Activated CD4-positive, alpha-beta T cell treated with anti-CD3 and anti-CD28 coated beads, Interleukin-2, amount 10 ng/mL, durations not matched to agents 7 days and 5 days (primary cell): ENCODE measurements at regions of chr7 and their contacts with region 1.

Region 1: DNA sequence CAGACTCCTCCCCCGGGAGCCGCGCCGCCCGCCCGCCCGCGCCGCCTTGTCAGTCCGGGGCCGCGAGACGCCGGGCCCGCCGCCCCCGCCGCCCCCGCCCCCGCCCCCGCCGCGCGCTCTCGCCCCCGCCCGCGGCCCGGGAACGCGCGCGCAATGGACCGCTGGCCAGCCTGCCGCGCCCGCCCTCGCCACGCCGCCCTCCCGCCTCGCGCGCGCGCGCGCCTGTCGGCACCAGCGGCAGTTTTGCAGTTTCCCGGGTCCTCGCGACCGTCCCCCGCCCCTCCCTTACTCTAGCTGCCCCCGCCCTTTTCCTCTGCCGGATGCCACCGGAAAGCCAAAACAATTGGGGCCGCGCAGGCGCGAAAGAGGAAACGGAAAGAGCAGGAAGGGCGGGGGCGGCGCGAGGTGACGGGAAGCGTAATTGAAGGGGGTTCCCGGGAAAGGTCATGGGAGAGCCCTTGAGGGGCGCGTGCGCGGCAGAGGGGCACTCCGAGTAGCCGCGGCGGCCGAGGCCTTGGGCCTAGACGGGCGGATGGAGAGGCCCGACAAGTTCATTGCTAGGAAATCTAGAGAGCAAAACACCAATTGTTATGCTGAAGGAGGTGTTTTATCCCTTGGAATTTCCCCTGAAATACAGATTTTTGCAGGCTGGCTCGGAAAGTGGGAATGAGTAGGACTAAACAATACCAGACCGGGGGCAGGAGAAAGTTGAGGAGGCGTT is 400 bp upstream of the KBTBD2 start:
- DNase-seq: peak; percentile 98
- H3K4me3 Mint-ChIP-seq: peak overlapping the region; percentile 95
- H3K27ac Mint-ChIP-seq: peak overlapping the region; percentile 100
- H3K4me1 Mint-ChIP-seq: peaks cover 47% of the 10 kb centered on the region
- H3K27me3 Mint-ChIP-seq: no peaks in the 10 kb centered on the region

Region 2: DNA sequence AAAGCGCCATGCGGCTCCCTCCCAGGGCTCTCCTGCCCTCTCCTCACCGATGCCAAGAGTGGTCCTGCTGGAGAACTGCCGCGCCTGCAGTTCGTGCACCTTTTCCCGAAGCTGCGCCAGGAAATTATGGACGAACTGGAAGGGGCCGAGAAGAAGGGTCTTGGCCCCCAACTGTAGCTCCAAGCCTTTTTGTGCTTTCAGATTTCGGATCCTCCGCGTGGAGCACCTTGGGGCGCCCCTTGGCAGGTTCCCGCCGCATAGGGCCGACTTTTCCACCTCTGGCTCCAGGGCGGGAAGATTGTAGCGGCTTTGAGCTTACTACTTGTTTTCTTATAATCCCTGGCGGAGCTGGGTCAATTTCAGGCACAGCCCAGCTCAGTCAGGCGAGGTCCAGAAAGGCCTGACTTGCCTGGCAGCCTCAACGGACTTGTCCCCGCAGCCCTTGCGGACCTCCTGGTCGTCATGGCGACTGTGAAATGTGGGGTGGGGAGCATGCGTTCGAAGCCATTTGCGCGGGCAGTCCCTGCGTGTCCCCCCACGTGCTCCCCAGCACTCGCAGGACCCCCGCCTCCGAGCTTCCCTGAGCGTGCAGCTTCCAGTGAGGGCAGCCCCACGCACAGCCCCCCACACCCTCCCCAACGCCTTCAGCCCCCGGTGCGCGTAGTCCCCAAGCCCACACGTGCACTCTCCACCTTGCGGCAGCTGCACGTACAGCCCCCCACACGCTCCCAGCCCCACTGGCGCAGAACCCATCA is 130.3 kb before region 1 on chr7:
- CTCF ChIA-PET with region 1: no interaction called
- POLR2A ChIA-PET with region 1: no interaction called
- DNase-seq: no peak
- H3K4me3 Mint-ChIP-seq: no peak overlapping the region
- H3K27ac Mint-ChIP-seq: no peak overlapping the region
- H3K4me1 Mint-ChIP-seq: peaks cover 8% of the 10 kb centered on the region
- H3K27me3 Mint-ChIP-seq: peaks cover 60% of the 10 kb centered on the region

Region 3: DNA sequence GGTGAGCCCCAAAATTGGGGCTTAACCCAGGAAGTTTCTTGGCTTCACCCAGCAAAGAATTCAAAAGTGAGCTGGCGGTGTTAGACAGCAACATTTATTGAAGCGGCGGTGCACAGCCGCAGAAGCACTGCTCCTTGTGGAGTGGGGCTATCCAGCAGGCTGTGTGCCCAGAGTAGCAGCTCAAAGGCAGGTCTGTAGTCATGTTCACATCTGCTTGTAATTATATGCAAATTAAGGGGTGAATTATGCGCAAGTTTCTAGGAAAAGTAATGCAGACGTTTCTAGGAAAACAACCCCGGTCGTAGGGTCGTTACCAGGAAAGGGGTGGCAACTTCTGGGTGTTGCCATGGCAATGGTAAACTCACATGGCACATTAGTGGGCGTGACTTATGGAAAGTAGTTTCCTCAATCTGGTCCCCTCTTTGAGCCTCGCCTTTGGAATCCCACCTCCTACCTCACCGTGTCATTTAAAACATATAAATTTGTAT is 13.3 kb after region 1 on chr7:
- CTCF ChIA-PET with region 1: interaction called, 17 read pairs
- POLR2A ChIA-PET with region 1: interaction called, 28 read pairs
- DNase-seq: peak; percentile 92
- H3K4me3 Mint-ChIP-seq: peak overlapping the region; percentile 75
- H3K27ac Mint-ChIP-seq: peak overlapping the region; percentile 94
- H3K4me1 Mint-ChIP-seq: peaks cover 21% of the 10 kb centered on the region
- H3K27me3 Mint-ChIP-seq: no peaks in the 10 kb centered on the region